CD4-positive, alpha-beta T cell (primary cell): ENCODE measurements at regions of chr6 and their contacts with region 1.

Region 1: GRCh38 chr6:143536865-143537691 is 25.6 kb upstream of the FUCA2 start:
- DNase-seq: peak; percentile 35 to 84 (median 58)
- ATAC-seq: peak; percentile 65
- H3K4me3 ChIP-seq: peak overlapping the region; percentile 57
- H3K4me3 Mint-ChIP-seq: peak overlapping the region; percentile 91
- H3K27ac ChIP-seq: peak overlapping the region; percentile 14 to 82
- H3K27ac Mint-ChIP-seq: peak overlapping the region; percentile 95
- H3K4me1 ChIP-seq: peaks cover 52% of the 10 kb centered on the region
- H3K4me1 Mint-ChIP-seq: peaks cover 51% of the 10 kb centered on the region
- H3K27me3 ChIP-seq: no peaks in the 10 kb centered on the region
- H3K27me3 Mint-ChIP-seq: no peaks in the 10 kb centered on the region
- CTCF ChIP-seq: peak; percentile 21

Region 2: GRCh38 chr6:143260857-143261256 is 276.2 kb before region 1 on chr6:
- CTCF ChIA-PET with region 1: no interaction called
- POLR2A ChIA-PET with region 1: no interaction called
- intact Hi-C with region 1: no loop called
- DNase-seq: no peak
- ATAC-seq: no peak
- H3K4me3 ChIP-seq: no peak overlapping the region
- H3K4me3 Mint-ChIP-seq: no peak overlapping the region
- H3K27ac ChIP-seq: no peak overlapping the region
- H3K27ac Mint-ChIP-seq: no peak overlapping the region
- H3K4me1 ChIP-seq: no peaks in the 10 kb centered on the region
- H3K4me1 Mint-ChIP-seq: no peaks in the 10 kb centered on the region
- H3K27me3 ChIP-seq: no peaks in the 10 kb centered on the region
- H3K27me3 Mint-ChIP-seq: no peaks in the 10 kb centered on the region
- CTCF ChIP-seq: no peak

Region 3: DNA sequence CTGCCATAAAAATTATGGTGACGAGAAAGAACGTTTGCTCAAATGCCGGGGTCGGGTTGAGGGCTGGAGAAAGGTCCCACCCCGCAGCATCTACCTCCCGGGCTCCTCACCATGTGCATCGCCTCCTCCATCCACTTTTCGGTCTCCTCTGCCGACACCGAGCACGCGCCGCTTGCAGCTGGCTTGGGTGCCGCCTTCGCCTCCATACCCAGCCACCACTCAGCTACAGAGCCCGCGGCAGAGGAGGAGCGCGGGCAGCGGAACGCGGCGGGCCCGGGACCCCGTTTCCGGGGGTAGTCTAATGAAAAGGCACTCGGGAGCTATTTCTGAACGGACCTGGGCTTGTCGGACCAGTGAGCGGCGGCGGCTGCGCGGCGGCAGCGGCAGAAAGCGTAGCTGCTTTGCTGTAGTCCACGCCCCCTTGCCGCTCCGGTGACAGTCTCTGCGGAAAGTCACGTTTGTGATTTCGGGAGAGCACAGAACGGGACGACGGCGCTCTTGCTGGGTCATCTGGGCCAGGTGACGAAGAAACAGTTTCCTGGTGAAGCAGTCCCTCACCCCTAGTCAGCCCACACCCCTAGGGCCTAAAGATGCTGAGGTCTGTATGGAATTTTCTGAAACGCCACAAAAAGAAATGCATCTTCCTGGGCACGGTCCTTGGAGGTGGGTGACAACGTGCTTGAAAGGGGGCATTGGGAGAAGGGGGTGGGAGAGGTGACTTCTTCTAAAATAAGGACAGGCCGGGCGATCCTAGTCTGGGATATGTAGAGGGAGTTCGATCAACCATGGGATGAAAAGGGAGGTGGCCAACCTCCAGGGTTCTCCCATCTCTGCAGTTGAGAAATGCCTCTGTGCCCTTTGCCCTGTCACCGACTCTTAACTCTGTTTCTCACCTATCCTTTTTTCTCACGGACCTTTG is 86.4 kb before region 1 on chr6 and contains the starts of genes ADAT2 and PEX3:
- CTCF ChIA-PET with region 1: no interaction called
- POLR2A ChIA-PET with region 1: interaction called, 16 read pairs
- intact Hi-C with region 1: loop called (anchors 5 kb)
- DNase-seq: peak; percentile 85 to 97 (median 90)
- ATAC-seq: peak; percentile 90
- H3K4me3 ChIP-seq: peak within 1 kb of the TSS; percentile 72
- H3K4me3 Mint-ChIP-seq: peak within 1 kb of the TSS; percentile 99
- H3K27ac ChIP-seq: peak within 1 kb of the TSS; percentile 72 to 78
- H3K27ac Mint-ChIP-seq: peak within 1 kb of the TSS; percentile 94
- H3K4me1 ChIP-seq: peaks cover 15% of the 10 kb centered on the region
- H3K4me1 Mint-ChIP-seq: peaks cover 60% of the 10 kb centered on the region
- H3K27me3 ChIP-seq: no peaks in the 10 kb centered on the region
- H3K27me3 Mint-ChIP-seq: no peaks in the 10 kb centered on the region
- CTCF ChIP-seq: no peak
- total RNA-seq, gene ADAT2: 14.6 to 17.4 TPM
- total RNA-seq, gene PEX3: 7.3 to 9.7 TPM

Region 4: DNA sequence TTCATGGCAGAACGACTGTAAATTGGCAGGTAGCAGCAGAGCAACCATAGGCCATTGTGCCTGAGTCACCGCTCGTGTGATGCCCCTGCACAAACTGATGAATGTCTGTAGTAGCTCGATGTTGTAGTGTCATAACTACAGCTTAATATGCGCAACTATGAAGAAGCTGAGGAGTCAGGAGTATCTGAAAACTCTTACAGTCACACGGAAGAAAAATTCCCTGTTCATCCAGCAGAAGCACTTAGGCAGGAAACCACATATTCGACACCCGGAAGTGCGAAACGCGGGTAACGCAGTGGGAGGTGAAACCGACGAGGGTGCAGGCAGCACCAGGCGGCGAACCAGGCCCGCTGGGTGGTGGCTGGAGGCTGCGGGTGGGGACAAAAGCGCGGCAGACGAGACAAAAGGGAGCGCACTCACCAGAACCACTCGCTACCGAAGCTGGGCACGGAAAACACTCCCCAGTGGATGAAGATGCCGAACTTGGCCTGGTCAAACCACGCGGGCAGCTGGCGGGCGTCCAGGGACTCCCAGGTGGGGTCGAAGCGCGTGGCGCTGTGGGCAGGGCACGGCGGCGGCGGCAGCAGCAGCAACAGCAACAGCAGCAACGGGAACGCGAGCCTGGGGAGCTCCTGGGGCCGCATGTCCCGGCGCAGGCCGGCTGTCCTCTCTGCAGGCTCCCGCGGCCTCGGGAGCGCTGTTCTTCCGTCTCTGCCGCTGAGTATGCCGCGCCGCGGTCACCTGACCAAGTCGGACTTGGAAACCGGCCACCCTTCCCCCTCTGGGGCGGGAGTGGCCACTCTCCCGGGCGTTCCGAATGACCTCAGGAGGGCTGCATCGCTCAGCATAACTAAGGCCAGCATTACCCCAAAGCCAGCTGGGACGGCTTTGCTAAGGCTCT is 25.8 kb before region 1 on chr6 and contains the start of gene FUCA2:
- CTCF ChIA-PET with region 1: interaction called, 7 read pairs
- POLR2A ChIA-PET with region 1: interaction called, 40 read pairs
- intact Hi-C with region 1: no loop called
- DNase-seq: peak; percentile 42 to 86 (median 62)
- ATAC-seq: peak; percentile 84
- H3K4me3 ChIP-seq: peak within 1 kb of the TSS; percentile 66
- H3K4me3 Mint-ChIP-seq: peak within 1 kb of the TSS; percentile 96
- H3K27ac ChIP-seq: peak within 1 kb of the TSS; percentile 31 to 46
- H3K27ac Mint-ChIP-seq: peak within 1 kb of the TSS; percentile 90
- H3K4me1 ChIP-seq: peaks cover 25% of the 10 kb centered on the region
- H3K4me1 Mint-ChIP-seq: peaks cover 23% of the 10 kb centered on the region
- H3K27me3 ChIP-seq: no peaks in the 10 kb centered on the region
- H3K27me3 Mint-ChIP-seq: no peaks in the 10 kb centered on the region
- CTCF ChIP-seq: no peak
- total RNA-seq, gene FUCA2: 1.1 to 1.5 TPM

Region 5: DNA sequence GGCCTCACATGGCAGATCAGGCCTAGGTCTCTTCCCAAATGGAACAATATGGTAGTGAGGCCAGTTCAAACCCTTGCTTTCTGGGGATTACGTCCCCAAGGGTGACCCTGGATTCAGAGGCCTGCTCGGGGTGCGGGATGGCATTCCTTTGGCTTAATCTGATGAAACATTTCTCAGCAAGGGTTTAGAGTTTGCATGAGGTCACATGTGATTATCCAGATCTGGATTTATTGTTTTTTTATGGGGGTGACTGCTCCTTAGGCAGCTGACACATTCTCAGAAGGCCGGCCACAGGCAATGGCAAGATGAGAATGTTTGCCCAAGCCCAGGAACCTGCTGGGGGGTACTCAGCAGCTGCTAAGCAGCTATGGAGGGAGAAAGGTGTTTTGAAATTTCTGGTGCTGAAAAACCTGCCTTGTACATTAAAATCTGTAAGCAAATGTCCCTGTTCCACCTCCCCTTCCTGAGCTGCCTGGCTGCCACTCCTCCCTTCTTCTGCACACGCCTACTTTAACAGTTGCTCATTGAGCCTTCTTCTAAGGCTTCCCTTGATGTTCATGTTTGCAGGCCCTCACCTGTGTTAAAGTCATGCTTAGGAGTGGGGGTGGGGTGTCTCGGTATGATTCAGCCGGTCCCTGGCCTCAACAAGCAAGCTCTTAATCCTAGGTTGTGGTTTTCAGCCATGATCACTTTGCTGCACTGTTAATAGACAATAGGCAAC is 12.3 kb after region 1 on chr6:
- CTCF ChIA-PET with region 1: interaction called, 11 read pairs
- POLR2A ChIA-PET with region 1: interaction called, 48 read pairs
- intact Hi-C with region 1: no loop called
- DNase-seq: peak in 9 of 14 experiments; percentile 20 to 74 (median 47)
- ATAC-seq: peak; percentile 56
- H3K4me3 ChIP-seq: no peak overlapping the region
- H3K4me3 Mint-ChIP-seq: peak overlapping the region; percentile 43
- H3K27ac ChIP-seq: no peak overlapping the region
- H3K27ac Mint-ChIP-seq: peak overlapping the region; percentile 80
- H3K4me1 ChIP-seq: peaks cover 41% of the 10 kb centered on the region
- H3K4me1 Mint-ChIP-seq: peaks cover 77% of the 10 kb centered on the region
- H3K27me3 ChIP-seq: no peaks in the 10 kb centered on the region
- H3K27me3 Mint-ChIP-seq: no peaks in the 10 kb centered on the region
- CTCF ChIP-seq: no peak